HEK293T (cell line): ENCODE measurements at regions of chr11 and their contacts with region 1.

Region 1: GRCh38 chr11:66063900-66064299 is 6.2 kb upstream of the PACS1 start:
- DNase-seq: no peak

Region 2: GRCh38 chr11:65988791-65989592 is 74.9 kb before region 1 on chr11:
- CTCF ChIA-PET with region 1: no interaction called
- POLR2A ChIA-PET with region 1: no interaction called
- DNase-seq: peak; percentile 88

Region 3: DNA sequence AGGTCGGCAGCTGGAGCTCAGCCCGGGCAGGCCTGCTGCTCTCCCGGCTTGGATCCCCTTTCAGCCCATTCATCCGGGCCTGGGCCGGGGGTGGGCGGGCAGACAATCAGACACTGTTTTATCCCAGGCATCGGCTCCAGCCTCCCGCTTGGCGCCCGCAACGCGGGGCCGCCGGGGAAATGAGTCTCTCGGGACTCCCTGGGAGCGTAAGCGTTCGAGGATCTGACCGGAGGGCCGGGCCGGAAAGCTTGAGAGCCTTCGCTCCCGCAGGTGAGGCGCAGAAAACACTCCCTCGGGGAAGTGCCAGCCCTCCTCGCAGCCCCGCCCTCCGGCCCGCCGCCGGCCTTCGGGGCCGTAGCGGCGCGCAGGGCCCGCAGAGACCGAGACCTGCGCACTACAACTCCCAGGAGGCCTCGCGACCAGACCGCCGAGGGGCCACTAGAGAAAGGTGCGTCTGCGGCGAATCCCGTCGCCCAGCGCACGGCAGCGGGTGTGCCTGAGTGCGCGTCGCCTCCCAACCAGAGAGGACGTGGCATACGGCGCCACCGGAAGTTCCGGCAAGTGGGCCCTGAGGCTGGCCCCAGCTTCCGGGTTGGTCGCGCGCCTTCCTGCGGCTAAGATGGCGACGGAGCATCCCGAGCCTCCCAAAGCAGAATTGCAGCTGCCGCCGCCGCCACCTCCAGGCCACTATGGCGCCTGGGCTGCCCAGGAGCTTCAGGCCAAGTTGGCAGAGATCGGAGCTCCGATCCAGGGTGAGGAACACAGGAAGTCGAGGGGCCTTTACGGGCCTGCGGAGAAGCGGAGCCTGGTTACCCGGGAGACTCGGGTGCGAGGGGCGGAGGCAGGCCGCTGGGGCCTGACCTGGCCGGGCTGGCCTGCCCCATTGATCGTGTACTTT is 11.9 kb before region 1 on chr11 and contains the start of gene SF3B2:
- CTCF ChIA-PET with region 1: interaction called, 24 read pairs
- POLR2A ChIA-PET with region 1: interaction called, 34 read pairs
- DNase-seq: peak; percentile 96

Region 4: DNA sequence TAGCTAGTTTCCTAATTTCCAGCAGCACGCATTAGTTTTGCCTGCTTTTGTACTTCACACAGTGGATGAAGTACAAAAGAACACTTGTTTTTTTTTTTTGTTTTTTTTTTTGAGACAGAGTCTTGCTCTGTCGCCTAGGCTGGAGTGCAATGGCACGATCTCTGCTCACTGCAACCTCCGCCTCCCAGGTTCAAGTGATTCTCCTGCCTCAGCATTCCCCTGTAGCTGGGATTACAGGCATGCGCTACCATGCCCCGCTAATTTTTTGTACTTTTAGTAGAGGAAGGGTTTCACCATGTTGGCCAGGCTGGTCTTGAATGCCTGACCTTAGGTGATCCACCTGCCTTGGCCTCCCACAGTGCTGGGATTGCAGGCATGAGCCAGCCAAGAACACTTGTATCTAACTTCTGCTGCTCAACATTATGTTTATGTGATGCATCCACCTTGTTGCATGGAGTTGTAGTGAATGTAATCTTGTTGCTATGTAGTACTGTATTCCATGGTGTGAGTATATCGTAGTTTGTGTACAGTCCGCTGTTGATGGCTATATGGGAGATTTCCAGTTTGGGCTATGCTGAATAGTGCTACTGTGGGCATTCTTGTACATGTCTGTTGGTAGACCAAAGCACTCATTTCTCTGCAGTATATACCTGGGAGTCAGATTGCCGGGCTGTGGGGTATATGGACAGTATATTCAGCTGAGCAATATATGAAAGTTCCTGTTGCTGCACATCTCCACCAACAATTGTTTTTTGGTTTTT is 23.4 kb after region 1 on chr11:
- CTCF ChIA-PET with region 1: no interaction called
- POLR2A ChIA-PET with region 1: no interaction called
- DNase-seq: no peak

Region 5: DNA sequence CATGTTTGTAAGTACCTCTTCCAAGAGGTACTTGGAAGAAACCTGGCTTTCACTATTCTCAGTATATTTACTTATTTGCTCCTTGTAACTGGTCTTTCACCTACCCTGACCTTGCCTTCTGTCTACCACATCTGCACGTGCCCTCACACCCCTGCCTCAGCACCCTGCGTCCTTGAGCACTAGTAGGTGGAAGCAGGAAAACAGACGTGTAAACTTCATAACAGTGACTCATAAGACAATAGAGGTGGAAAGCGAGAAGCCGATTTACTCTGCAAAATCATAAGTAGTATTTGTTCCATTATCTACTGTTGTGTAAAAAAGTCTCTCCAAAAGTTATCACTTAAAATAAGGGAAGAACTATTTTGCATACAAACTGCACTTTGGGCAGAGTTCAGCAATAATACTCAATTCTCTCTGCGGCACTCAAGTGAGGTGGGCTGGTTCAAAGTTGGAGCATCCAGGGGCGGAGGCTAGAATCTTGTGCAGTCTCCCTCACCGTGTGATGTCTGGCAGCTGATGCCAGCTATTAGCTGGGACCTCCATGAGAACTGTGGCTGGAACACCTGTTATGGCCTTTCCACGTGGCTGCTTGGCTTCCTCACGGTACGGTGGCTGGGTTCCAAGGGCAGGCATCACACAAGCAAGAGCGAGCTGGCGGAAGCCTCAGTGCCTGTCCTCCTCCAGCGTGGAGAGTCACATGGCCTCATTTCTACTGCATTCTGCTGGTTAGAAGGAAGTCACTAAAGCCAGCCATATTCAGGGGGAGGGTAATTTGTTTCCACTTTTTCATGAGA is 36.6 kb after region 1 on chr11:
- CTCF ChIA-PET with region 1: no interaction called
- POLR2A ChIA-PET with region 1: no interaction called
- DNase-seq: no peak